ENCODE measurements at regions of chr2 and their contacts with region 1.

Region 1: GRCh38 chr2:107529146-107529545 is 297.5 kb upstream of the RGPD4 start:
- DNase-seq: peak in 1 of 2 donors; percentile 29
- ATAC-seq: peak in 7 of 8 donors; percentile 68 to 90 (median 73)
- H3K4me3 ChIP-seq: peak overlapping the region in 4 of 10 donors; percentile 17 to 28 (median 22)
- H3K27ac ChIP-seq: no peak overlapping the region
- H3K4me1 ChIP-seq: peaks cover 0 to 3% (median 0%) of the 10 kb centered on the region in 9 donors
- H3K27me3 ChIP-seq: no peaks in the 10 kb centered on the region
- CTCF ChIP-seq: no peak

Region 2: GRCh38 chr2:106572541-106573450 is 956.4 kb before region 1 on chr2:
- intact Hi-C with region 1: no loop called
- DNase-seq: no peak
- ATAC-seq: no peak
- H3K4me3 ChIP-seq: no peak overlapping the region
- H3K27ac ChIP-seq: no peak overlapping the region
- H3K4me1 ChIP-seq: peaks cover 0 to 17% (median 10%) of the 10 kb centered on the region in 9 donors
- H3K27me3 ChIP-seq: no peaks in the 10 kb centered on the region
- CTCF ChIP-seq: peak in 8 of 9 donors; percentile 9 to 56 (median 41)

Region 3: DNA sequence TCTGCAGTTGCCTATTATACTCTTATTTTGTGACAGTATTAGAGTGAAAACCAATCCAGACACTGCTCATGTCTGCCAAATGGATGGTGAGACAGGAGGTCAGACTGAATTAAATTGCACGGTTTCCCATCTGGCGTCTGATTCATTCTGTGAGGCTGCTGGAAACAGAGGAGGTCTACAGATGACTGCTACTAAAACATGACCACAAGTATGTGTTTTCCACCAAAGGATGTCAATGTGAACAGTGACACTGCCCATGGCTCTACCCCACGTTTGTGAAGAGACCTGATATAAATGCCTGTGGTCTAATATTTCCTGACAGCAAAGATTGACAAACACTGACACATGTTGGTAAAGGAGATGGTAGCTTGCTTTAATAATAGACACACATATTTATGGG is 538.8 kb before region 1 on chr2:
- intact Hi-C with region 1: loop called in 1 of 10 experiments (anchors 5 kb)
- DNase-seq: no peak
- ATAC-seq: no peak
- H3K4me3 ChIP-seq: no peak overlapping the region
- H3K27ac ChIP-seq: no peak overlapping the region
- H3K4me1 ChIP-seq: no peaks in the 10 kb centered on the region
- H3K27me3 ChIP-seq: no peaks in the 10 kb centered on the region
- CTCF ChIP-seq: no peak

Region 4: DNA sequence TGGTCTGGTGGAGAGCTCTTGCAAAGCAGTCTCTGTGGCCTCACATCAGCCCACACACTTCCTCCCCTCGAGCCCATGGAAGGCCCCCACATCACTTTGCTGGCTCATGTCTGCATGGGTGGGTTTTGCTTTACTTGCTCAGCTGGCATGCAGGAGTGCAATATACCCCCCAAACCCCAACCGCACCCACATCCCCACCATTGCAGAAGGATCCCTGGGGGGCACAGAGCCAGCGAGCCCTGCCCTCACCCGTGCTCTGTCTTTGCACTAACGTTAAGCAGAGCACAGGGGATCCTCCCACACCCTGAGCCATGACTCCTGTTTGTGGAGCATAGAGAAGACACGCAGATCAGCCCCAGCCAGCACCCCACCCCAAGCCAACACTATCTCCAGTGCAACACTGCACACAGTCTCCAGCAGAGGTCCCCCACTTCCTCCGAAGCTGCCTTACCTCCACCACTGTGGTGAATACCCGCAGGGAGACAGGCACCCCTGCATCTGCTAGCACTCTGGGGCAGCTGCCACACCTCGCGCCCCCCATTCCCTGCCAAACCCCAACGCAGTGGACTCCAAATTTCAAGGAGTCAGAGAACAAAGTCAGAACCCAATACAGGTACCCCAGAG is 119.7 kb after region 1 on chr2:
- intact Hi-C with region 1: loop called in 1 of 10 experiments (anchors 10 kb)
- DNase-seq: no peak
- ATAC-seq: no peak
- H3K4me3 ChIP-seq: no peak overlapping the region
- H3K27ac ChIP-seq: no peak overlapping the region
- H3K4me1 ChIP-seq: no peaks in the 10 kb centered on the region
- H3K27me3 ChIP-seq: no peaks in the 10 kb centered on the region
- CTCF ChIP-seq: no peak